ENCODE measurements at regions of chr12 and their contacts with region 1.

Region 1: GRCh38 chr12:80087486-80088213 is 11.7 kb upstream of the OTOGL start:
- DNase-seq: no peak
- H3K4me3 Mint-ChIP-seq: no peak overlapping the region
- H3K27ac Mint-ChIP-seq: no peak overlapping the region
- H3K4me1 Mint-ChIP-seq: peaks cover 13% of the 10 kb centered on the region
- H3K27me3 Mint-ChIP-seq: no peaks in the 10 kb centered on the region

Region 2: GRCh38 chr12:80142640-80143039 is 55.0 kb after region 1 on chr12:
- CTCF ChIA-PET with region 1: no interaction called
- intact Hi-C with region 1: loop called (anchors 5 kb)
- DNase-seq: peak; percentile 29
- H3K4me3 Mint-ChIP-seq: no peak overlapping the region
- H3K27ac Mint-ChIP-seq: no peak overlapping the region
- H3K4me1 Mint-ChIP-seq: no peaks in the 10 kb centered on the region
- H3K27me3 Mint-ChIP-seq: no peaks in the 10 kb centered on the region

Region 3: DNA sequence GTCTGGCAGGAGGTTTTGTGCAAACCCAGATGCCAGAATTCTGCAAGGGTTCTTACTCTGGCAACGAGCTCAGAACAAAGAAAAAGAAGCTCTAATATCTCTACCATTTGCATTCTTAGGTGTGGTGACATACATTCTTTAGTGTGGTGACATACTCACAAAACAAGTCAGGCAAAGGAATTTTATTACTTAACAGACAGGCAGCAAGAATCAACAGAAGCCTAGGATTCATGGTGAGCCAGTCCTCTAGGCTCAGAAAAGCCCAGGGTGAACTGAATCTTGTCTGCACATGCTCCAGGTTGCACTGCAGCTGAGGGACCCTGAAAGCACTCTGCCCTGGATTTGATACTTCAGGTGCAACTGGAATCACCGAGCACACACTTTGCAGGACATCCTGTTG is 234.0 kb after region 1 on chr12:
- CTCF ChIA-PET with region 1: no interaction called
- intact Hi-C with region 1: no loop called
- DNase-seq: no peak
- H3K4me3 Mint-ChIP-seq: no peak overlapping the region
- H3K27ac Mint-ChIP-seq: no peak overlapping the region
- H3K4me1 Mint-ChIP-seq: no peaks in the 10 kb centered on the region
- H3K27me3 Mint-ChIP-seq: no peaks in the 10 kb centered on the region